ENCODE measurements at regions of chr12 and their contacts with region 1.

Region 1: DNA sequence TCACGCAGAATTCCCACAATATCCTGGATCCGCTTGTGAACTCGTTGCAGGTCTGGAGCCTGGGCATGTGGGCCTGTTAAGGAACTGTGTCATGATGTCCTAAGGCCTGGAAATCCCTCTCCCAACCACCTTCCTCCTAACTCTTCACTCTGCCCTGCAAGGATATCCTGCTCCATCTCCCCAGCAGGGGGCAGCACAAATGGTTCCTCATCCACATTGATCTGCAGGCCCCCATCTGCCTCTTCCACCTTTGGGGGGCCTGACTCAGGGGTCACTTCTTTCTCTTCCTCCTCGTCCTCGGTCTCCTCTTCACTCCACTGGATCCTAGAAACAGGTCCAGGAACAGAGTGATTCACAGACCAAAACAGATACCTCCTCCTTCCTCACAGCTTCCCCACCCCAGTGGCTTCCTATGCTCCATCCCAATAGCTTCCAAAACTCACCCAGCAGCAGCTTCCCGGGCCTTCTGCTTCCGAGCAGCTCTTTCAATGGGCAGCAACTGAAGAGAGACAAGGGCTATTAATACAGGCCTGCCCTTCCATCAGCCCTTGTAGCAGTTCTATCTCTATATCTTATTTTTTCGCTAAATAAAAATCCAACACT is 4.5 kb downstream of the NOP2 start:
- DNase-seq: peak; percentile 44
- H3K4me3 ChIP-seq: no peak overlapping the region
- H3K27ac ChIP-seq: no peak overlapping the region
- H3K4me1 ChIP-seq: peaks cover 7% of the 10 kb centered on the region
- H3K27me3 ChIP-seq: no peaks in the 10 kb centered on the region
- CTCF ChIP-seq: peak; percentile 79 to 80
- POLR2A ChIP-seq: no peak

Region 2: GRCh38 chr12:6443361-6443983 is 120.1 kb before region 1 on chr12:
- CTCF ChIA-PET with region 1: no interaction called
- POLR2A ChIA-PET with region 1: no interaction called
- dilution Hi-C with region 1: no loop called
- intact Hi-C with region 1: no loop called
- DNase-seq: no peak
- H3K4me3 ChIP-seq: no peak overlapping the region
- H3K27ac ChIP-seq: no peak overlapping the region
- H3K4me1 ChIP-seq: no peaks in the 10 kb centered on the region
- H3K27me3 ChIP-seq: no peaks in the 10 kb centered on the region
- CTCF ChIP-seq: no peak
- POLR2A ChIP-seq: no peak

Region 3: DNA sequence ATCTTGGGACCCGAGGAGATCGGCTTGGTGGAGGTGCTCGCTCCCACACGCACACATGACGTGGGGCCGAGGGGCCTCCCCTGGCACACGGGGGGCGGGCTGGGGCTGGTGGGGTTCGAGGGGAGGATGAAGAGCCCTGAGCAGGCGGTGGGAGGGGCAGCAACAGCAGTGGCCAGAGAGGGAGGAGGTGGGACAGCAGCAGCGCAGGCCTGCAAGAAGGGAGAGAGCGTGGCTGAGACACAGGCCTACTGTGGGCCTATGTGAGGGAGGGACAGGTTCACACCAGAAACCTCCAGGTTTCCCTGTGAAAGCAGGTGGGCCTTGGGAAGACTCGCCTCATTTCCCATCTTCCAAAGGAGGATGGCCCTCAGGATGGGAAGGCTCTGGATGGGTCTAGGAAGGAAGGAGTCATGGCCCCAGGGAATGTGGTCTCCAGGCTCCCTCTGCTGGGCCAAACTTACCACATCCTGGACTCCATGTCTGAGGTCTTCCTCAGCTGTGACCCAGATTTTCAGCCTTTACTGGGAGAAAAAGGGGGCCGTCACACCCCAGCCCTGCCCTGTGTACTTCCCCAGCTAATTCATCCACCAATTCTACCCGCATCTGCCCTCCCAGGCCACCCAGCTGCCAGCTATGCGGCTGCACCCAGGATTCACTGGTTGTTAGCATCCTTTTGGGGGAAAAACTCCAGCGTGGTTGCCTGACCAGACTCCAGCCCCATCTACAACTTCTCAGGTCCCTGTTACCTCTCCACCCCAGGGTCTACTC is 134.2 kb after region 1 on chr12:
- CTCF ChIA-PET with region 1: interaction called, 7 read pairs
- POLR2A ChIA-PET with region 1: no interaction called
- dilution Hi-C with region 1: no loop called
- intact Hi-C with region 1: loop called (anchors 1 kb)
- DNase-seq: peak; percentile 58
- H3K4me3 ChIP-seq: no peak overlapping the region
- H3K27ac ChIP-seq: no peak overlapping the region
- H3K4me1 ChIP-seq: peaks cover 4% of the 10 kb centered on the region
- H3K27me3 ChIP-seq: peaks cover 28 to 42% of the 10 kb centered on the region in 2 experiments
- CTCF ChIP-seq: peak; percentile 74 to 80
- POLR2A ChIP-seq: no peak

Region 4: DNA sequence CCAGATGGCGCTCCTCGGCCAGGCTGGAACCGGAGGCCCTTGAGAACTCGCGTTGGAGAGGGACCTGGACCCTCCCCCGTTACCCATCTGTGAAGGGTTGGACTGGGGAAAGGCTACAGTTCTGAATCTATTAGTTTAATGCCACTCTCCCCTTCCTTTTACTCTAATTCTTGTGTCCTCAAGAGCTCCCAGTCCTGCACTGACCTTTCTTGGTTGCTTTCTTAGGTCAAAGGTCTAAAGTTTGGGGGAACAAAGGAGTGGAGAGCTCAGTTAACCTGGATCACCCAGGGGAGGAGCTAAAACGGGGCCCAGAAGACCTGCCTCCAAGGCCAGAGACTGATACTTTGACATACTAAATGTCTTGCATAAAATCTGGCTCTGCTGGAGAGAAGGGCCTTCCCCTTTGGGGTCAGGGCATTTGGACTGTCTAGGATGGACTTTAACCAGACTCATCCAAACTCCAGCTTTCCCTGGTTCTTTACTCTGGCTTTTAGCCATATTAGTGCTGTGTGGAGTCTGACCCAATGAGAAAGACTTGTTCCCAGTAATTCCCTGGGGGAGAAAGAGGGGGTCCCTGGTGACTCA is 190.3 kb after region 1 on chr12:
- CTCF ChIA-PET with region 1: no interaction called
- POLR2A ChIA-PET with region 1: no interaction called
- dilution Hi-C with region 1: no loop called
- intact Hi-C with region 1: no loop called
- DNase-seq: no peak
- H3K4me3 ChIP-seq: no peak overlapping the region
- H3K27ac ChIP-seq: no peak overlapping the region
- H3K4me1 ChIP-seq: peaks cover 10% of the 10 kb centered on the region
- H3K27me3 ChIP-seq: no peaks in the 10 kb centered on the region
- CTCF ChIP-seq: peak in 1 of 2 donors; percentile 99
- POLR2A ChIP-seq: no peak

Measured in endothelial cell of umbilical vein (primary cell).